Common myeloid progenitor, CD34-positive (primary cell): ENCODE measurements at regions of chr7 and their contacts with region 1.

Region 1: GRCh38 chr7:137953043-137953664 is 48.7 kb downstream of the CREB3L2 start:
- DNase-seq: no peak
- H3K4me3 ChIP-seq: no peak overlapping the region
- H3K27ac ChIP-seq: peak overlapping the region in 1 of 2 experiments; percentile 47
- H3K4me1 ChIP-seq: peaks cover 8 to 19% (median 19%) of the 10 kb centered on the region in 4 experiments
- H3K27me3 ChIP-seq: no peaks in the 10 kb centered on the region

Region 2: GRCh38 chr7:137772748-137773147 is 180.4 kb before region 1 on chr7:
- CTCF ChIA-PET with region 1: no interaction called
- POLR2A ChIA-PET with region 1: no interaction called
- DNase-seq: no peak
- H3K4me3 ChIP-seq: no peak overlapping the region
- H3K27ac ChIP-seq: no peak overlapping the region
- H3K4me1 ChIP-seq: no peaks in the 10 kb centered on the region
- H3K27me3 ChIP-seq: no peaks in the 10 kb centered on the region

Region 3: GRCh38 chr7:137970253-137970975 is 17.3 kb after region 1 on chr7:
- CTCF ChIA-PET with region 1: interaction called, 16 read pairs
- POLR2A ChIA-PET with region 1: interaction called, 3 read pairs
- DNase-seq: peak in 2 of 3 donors; percentile 33 to 47
- H3K4me3 ChIP-seq: no peak overlapping the region
- H3K27ac ChIP-seq: peak overlapping the region in 1 of 2 experiments; percentile 40
- H3K4me1 ChIP-seq: peaks cover 0 to 36% (median 24%) of the 10 kb centered on the region in 4 experiments
- H3K27me3 ChIP-seq: no peaks in the 10 kb centered on the region

Region 4: DNA sequence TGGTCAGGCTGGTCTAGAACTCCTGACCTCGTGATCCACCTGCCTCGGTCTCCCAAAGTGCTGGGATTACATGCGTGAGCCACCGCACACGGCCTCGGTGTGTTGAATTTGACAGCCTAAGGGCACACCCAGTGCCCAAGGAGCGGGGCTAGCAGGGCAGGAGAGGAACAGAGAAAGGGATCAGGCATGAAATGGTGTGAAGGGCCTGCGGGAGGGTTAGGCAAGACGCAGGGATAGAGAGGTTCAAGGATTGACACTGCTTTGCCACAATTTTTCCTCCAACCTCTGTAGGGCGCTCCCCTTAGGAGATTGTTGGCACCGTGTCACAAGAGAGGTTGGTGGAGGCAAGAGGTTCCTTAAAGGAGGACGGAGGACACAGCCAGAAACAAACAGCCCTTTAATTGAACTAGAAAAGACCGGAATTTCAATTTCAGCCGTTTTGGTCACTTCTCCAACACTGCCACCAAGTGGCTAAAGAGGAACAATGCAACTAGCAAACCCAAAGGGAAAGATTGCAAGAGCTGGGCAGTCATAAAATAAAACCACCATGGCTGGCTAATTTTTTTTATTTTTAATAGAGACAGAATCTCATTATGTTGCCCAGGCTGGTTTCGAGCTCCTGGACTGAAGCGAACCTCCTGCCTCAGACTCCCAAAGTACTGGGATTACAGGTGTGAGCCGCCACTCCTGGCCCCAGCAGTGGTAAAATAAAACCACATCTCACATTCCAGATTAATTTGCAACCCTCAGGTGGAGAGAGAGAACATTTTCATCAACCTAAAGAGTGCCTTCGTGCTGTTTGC is 55.6 kb after region 1 on chr7:
- CTCF ChIA-PET with region 1: no interaction called
- POLR2A ChIA-PET with region 1: no interaction called
- DNase-seq: peak; percentile 61 to 81 (median 77)
- H3K4me3 ChIP-seq: peak overlapping the region in 1 of 7 experiments; percentile 49
- H3K27ac ChIP-seq: no peak overlapping the region
- H3K4me1 ChIP-seq: peaks cover 0 to 15% (median 8%) of the 10 kb centered on the region in 4 experiments
- H3K27me3 ChIP-seq: no peaks in the 10 kb centered on the region